Aorta (tissue), 5 donors: ENCODE measurements at regions of chr6 and their contacts with region 1.

Region 1: GRCh38 chr6:44074439-44075136 is 52.7 kb downstream of the MRPL14 start:
- DNase-seq: peak; percentile 88 to 90
- ATAC-seq: peak; percentile 79
- H3K4me3 ChIP-seq: no peak overlapping the region
- H3K27ac ChIP-seq: no peak overlapping the region
- H3K4me1 ChIP-seq: no peaks in the 10 kb centered on the region
- H3K27me3 ChIP-seq: no peaks in the 10 kb centered on the region

Region 2: GRCh38 chr6:43667245-43668150 is 407.1 kb before region 1 on chr6:
- intact Hi-C with region 1: loop called (anchors 1 to 2 kb)
- DNase-seq: peak; percentile 85 to 94
- ATAC-seq: peak; percentile 78
- H3K4me3 ChIP-seq: no peak overlapping the region
- H3K27ac ChIP-seq: no peak overlapping the region
- H3K4me1 ChIP-seq: no peaks in the 10 kb centered on the region
- H3K27me3 ChIP-seq: no peaks in the 10 kb centered on the region

Region 3: GRCh38 chr6:43723737-43724295 is 350.8 kb before region 1 on chr6:
- intact Hi-C with region 1: loop called in 1 of 2 experiments (anchors 2 kb)
- DNase-seq: peak; percentile 70 to 81
- ATAC-seq: peak; percentile 65
- H3K4me3 ChIP-seq: no peak overlapping the region
- H3K27ac ChIP-seq: no peak overlapping the region
- H3K4me1 ChIP-seq: no peaks in the 10 kb centered on the region
- H3K27me3 ChIP-seq: no peaks in the 10 kb centered on the region

Region 4: GRCh38 chr6:43769526-43770416 is 304.8 kb before region 1 on chr6 and contains the start of gene VEGFA:
- intact Hi-C with region 1: loop called (anchors 1 kb)
- DNase-seq: peak; percentile 95 to 97
- ATAC-seq: peak; percentile 91
- H3K4me3 ChIP-seq: peak within 1 kb of the TSS; percentile 68 to 87
- H3K27ac ChIP-seq: peak within 1 kb of the TSS in 1 of 2 donors; percentile 58
- H3K4me1 ChIP-seq: no peaks in the 10 kb centered on the region
- H3K27me3 ChIP-seq: peaks cover 0 to 1% of the 10 kb centered on the region in 2 donors
- total RNA-seq, gene VEGFA: 107 to 247 TPM

Region 5: DNA sequence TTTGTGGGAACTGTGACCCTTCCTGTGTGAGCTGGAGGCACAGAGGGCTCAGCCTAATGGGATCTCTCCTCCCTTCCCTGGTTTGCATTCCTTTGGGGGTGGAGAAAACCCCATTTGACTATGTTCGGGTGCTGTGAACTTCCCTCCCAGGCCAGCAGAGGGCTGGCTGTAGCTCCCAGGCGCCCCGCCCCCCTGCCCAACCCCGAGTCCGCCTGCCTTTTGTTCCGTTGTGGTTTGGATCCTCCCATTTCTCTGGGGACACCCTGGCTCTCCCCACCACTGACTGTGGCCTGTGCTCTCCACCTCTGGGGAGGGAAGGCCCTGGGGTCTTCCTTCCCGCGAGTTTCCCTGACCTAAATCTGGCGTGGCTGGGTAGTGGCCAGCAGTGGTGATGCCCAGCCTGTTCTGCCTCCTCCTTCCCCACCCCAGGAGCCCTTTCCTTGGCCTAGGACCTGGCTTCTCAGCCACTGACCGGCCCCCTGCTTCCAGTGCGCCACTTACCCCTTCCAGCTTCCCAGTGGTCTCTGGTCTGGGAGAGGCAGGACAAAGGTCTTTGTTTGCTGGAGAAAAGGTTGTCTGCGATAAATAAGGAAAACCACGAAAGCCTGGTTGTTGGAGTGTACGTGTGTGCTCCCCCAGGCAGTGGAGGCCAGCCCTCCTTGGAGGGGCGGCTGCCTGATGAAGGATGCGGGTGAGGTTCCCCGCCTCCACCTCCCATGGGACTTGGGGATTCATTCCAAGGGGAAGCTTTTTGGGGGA is 299.6 kb before region 1 on chr6:
- intact Hi-C with region 1: loop called in 1 of 2 experiments (anchors 1 kb)
- DNase-seq: peak; percentile 75 to 87
- ATAC-seq: peak; percentile 52
- H3K4me3 ChIP-seq: no peak overlapping the region
- H3K27ac ChIP-seq: no peak overlapping the region
- H3K4me1 ChIP-seq: no peaks in the 10 kb centered on the region
- H3K27me3 ChIP-seq: peaks cover 0 to 1% of the 10 kb centered on the region in 2 donors

Region 6: GRCh38 chr6:43856005-43856765 is 218.4 kb before region 1 on chr6:
- intact Hi-C with region 1: loop called in 1 of 2 experiments (anchors 5 kb)
- DNase-seq: no peak
- ATAC-seq: no peak
- H3K4me3 ChIP-seq: no peak overlapping the region
- H3K27ac ChIP-seq: no peak overlapping the region
- H3K4me1 ChIP-seq: no peaks in the 10 kb centered on the region
- H3K27me3 ChIP-seq: no peaks in the 10 kb centered on the region

Region 7: GRCh38 chr6:43990627-43991619 is 83.7 kb before region 1 on chr6:
- intact Hi-C with region 1: loop called (anchors 5 kb)
- DNase-seq: peak; percentile 42 to 62
- ATAC-seq: no peak
- H3K4me3 ChIP-seq: no peak overlapping the region
- H3K27ac ChIP-seq: no peak overlapping the region
- H3K4me1 ChIP-seq: no peaks in the 10 kb centered on the region
- H3K27me3 ChIP-seq: no peaks in the 10 kb centered on the region

Region 8: DNA sequence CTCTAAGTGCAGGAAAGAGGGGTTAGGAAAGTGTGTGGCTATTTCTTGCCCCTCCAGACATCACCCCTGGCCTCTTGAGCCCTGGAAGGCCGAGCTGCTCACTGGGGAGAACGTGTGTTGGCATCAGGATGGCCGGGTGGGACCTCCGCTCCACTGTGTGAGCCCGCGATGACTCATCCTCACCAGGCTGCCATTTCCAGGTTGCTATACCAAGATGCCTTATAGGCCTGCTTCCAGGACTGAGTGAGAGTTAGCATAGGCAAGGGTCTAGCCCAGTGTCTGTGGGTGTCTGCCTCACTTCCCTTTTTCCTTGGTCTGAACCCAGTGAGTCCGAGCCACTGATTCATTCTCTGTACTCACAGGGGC is 52.3 kb before region 1 on chr6:
- intact Hi-C with region 1: no loop called
- DNase-seq: peak in 1 of 2 donors; percentile 68
- ATAC-seq: peak; percentile 21
- H3K4me3 ChIP-seq: no peak overlapping the region
- H3K27ac ChIP-seq: no peak overlapping the region
- H3K4me1 ChIP-seq: no peaks in the 10 kb centered on the region
- H3K27me3 ChIP-seq: no peaks in the 10 kb centered on the region